ENCODE measurements at regions of chr13 and their contacts with region 1.

Region 1: DNA sequence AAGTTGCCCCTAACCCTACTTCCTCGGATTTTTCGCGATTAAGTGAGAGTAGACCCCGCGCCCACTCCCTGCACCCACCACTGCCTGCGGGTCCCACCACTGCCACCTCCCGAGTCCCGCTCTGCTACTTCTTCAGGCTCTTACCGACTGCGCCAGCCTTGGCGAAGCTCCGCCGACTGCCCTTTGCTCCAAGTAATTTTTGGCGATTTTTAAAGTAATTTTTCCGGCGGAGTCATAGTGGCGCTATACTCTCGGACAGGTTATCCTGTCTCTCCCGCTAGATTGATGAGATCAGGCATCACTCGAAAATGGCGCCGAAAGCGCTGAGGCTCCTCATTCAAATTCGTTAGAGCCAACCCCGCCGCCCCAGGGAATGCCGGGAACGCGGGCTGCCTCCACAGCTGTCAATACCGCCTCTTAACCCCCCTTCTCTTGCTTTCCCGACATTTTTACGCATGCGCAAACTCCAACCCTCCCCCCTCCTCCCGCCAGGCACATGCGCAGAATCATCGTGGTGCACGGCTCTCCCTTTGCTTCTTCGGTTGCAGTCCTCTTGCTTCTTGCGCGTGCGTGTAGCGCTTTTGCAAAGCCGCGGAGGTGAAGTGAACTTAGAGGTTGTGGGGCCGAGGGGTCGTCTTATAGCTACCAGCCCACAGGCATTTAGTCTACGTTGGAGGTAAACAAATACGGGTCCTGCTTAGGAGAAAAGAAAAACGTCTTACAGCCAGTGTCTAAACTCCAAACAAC is 66.6 kb downstream of the KCNRG start:
- DNase-seq: peak; percentile 95
- ATAC-seq: peak; percentile 73
- H3K4me3 Mint-ChIP-seq: peak overlapping the region; percentile 100
- H3K27ac Mint-ChIP-seq: peak overlapping the region; percentile 100
- H3K4me1 Mint-ChIP-seq: peaks cover 62% of the 10 kb centered on the region
- H3K27me3 Mint-ChIP-seq: no peaks in the 10 kb centered on the region
- CTCF ChIP-seq: no peak

Region 2: DNA sequence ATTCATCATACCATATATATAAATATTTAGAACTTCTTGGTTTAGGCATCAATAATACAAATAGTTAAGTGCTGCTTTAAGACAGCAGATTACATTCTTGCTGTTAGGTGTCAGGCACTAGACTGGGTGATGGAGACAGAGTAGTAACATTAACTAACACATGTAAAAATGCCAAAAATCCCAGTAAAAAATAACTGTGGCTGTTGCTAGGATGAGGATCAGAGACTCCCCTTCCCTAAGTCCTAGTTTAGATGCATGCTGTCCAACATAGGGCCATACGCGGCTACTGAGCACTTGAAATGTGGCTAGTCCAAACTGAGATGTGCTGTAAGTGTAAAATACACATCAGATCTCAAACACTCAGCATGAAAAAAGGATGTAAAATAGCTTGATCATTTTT is 739.4 kb before region 1 on chr13:
- CTCF ChIA-PET with region 1: no interaction called
- POLR2A ChIA-PET with region 1: no interaction called
- intact Hi-C with region 1: no loop called
- DNase-seq: no peak
- ATAC-seq: no peak
- H3K4me3 Mint-ChIP-seq: no peak overlapping the region
- H3K27ac Mint-ChIP-seq: no peak overlapping the region
- H3K4me1 Mint-ChIP-seq: no peaks in the 10 kb centered on the region
- H3K27me3 Mint-ChIP-seq: no peaks in the 10 kb centered on the region
- CTCF ChIP-seq: no peak

Region 3: DNA sequence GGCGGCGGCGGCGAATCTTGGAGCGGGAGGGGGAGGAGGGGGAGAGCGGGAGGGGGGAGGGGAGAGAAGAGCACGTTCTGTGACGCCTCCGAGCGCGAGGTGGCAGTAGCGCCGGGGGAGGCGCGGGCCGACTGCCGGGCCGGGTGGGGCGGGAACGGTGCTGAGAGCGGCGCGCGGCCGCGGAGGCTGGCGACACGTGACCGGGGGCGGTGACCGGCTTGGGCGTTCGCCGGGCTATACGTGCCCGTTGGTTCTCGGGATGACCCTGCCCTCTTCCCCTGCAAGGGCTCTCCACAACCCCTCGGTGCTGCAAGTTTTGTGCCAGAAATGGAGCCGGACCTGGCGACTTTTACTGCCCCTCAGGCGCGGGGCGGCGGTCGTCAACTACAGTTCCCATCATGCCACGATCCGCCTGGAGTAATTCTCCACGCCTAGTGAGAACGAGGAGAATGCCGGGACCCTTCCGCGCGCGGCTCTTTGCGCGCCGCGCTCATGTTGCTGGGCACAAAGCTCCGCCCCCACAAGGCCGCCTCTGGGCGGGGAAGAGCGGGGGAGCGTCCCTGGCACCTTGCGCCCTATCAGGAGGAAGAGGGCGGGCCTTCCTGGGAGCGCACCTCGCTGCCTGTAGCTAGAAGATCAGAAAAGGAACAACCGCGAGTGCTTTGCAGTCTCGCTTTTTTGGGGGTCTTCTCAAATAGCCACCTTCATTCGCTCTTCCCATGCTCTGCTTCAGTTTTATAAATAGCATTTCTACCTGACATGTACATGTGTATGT is 289.1 kb before region 1 on chr13 and contains the start of gene KPNA3:
- CTCF ChIA-PET with region 1: no interaction called
- POLR2A ChIA-PET with region 1: no interaction called
- intact Hi-C with region 1: loop called (anchors 1 kb)
- DNase-seq: peak; percentile 88
- ATAC-seq: peak; percentile 89
- H3K4me3 Mint-ChIP-seq: peak within 1 kb of the TSS; percentile 97
- H3K27ac Mint-ChIP-seq: peak within 1 kb of the TSS; percentile 97
- H3K4me1 Mint-ChIP-seq: peaks cover 31% of the 10 kb centered on the region
- H3K27me3 Mint-ChIP-seq: no peaks in the 10 kb centered on the region
- CTCF ChIP-seq: no peak
- total RNA-seq, gene KPNA3: 28.6 and 28.7 TPM in 2 replicates

Region 4: GRCh38 chr13:50094615-50095293 is 12.9 kb after region 1 on chr13:
- CTCF ChIA-PET with region 1: interaction called, 12 read pairs
- POLR2A ChIA-PET with region 1: interaction called, 38 read pairs
- intact Hi-C with region 1: no loop called
- DNase-seq: no peak
- ATAC-seq: no peak
- H3K4me3 Mint-ChIP-seq: no peak overlapping the region
- H3K27ac Mint-ChIP-seq: no peak overlapping the region
- H3K4me1 Mint-ChIP-seq: peaks cover 32% of the 10 kb centered on the region
- H3K27me3 Mint-ChIP-seq: no peaks in the 10 kb centered on the region
- CTCF ChIP-seq: no peak

Region 5: GRCh38 chr13:50244713-50245574 is 163.1 kb after region 1 on chr13:
- CTCF ChIA-PET with region 1: interaction called, 3 read pairs
- POLR2A ChIA-PET with region 1: interaction called, 16 read pairs
- intact Hi-C with region 1: loop called (anchors 2 kb)
- DNase-seq: no peak
- ATAC-seq: peak; percentile 92
- H3K4me3 Mint-ChIP-seq: peak overlapping the region; percentile 2
- H3K27ac Mint-ChIP-seq: peak overlapping the region; percentile 91
- H3K4me1 Mint-ChIP-seq: peaks cover 40% of the 10 kb centered on the region
- H3K27me3 Mint-ChIP-seq: no peaks in the 10 kb centered on the region
- CTCF ChIP-seq: no peak

Region 6: GRCh38 chr13:50422181-50423148 is 340.6 kb after region 1 on chr13:
- CTCF ChIA-PET with region 1: no interaction called
- POLR2A ChIA-PET with region 1: no interaction called
- intact Hi-C with region 1: no loop called
- DNase-seq: no peak
- ATAC-seq: no peak
- H3K4me3 Mint-ChIP-seq: no peak overlapping the region
- H3K27ac Mint-ChIP-seq: no peak overlapping the region
- H3K4me1 Mint-ChIP-seq: peaks cover 19% of the 10 kb centered on the region
- H3K27me3 Mint-ChIP-seq: no peaks in the 10 kb centered on the region
- CTCF ChIP-seq: no peak

Region 7: GRCh38 chr13:50512474-50513299 is 430.8 kb after region 1 on chr13:
- CTCF ChIA-PET with region 1: no interaction called
- POLR2A ChIA-PET with region 1: interaction called, 18 read pairs
- intact Hi-C with region 1: loop called (anchors 5 kb)
- DNase-seq: peak; percentile 40
- ATAC-seq: peak; percentile 81
- H3K4me3 Mint-ChIP-seq: no peak overlapping the region
- H3K27ac Mint-ChIP-seq: no peak overlapping the region
- H3K4me1 Mint-ChIP-seq: peaks cover 3% of the 10 kb centered on the region
- H3K27me3 Mint-ChIP-seq: no peaks in the 10 kb centered on the region
- CTCF ChIP-seq: no peak

Region 8: DNA sequence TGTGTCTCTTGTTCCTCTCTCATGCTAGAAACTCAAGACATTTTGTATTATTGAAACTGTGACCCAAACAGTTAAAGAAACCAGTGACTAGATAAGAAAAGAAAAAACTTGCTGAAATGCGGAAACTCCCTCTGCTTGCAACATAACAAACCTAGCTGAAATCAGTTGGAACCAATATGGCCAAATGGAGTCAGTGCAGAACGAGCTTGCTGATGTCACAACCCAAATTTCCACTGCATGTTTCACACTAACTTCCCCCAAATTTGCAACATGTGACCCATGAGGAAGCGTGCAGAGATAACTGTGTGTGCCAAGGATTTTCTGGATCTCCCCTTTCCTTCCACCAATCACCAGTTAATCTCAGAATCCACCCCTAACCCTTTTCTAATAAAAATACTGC is 553.7 kb after region 1 on chr13:
- CTCF ChIA-PET with region 1: no interaction called
- POLR2A ChIA-PET with region 1: interaction called, 3 read pairs
- intact Hi-C with region 1: loop called (anchors 2 kb)
- DNase-seq: no peak
- ATAC-seq: peak; percentile 75
- H3K4me3 Mint-ChIP-seq: peak overlapping the region; percentile 61
- H3K27ac Mint-ChIP-seq: peak overlapping the region; percentile 96
- H3K4me1 Mint-ChIP-seq: peaks cover 42% of the 10 kb centered on the region
- H3K27me3 Mint-ChIP-seq: no peaks in the 10 kb centered on the region
- CTCF ChIP-seq: no peak